Vagina (tissue), 2 donors: ENCODE measurements at regions of chr3 and their contacts with region 1.

Region 1: GRCh38 chr3:127970966-127971592 is 56.0 kb downstream of the KBTBD12 start:
- DNase-seq: no peak
- H3K4me3 ChIP-seq: no peak overlapping the region
- H3K27ac ChIP-seq: no peak overlapping the region
- H3K4me1 ChIP-seq: no peaks in the 10 kb centered on the region
- H3K27me3 ChIP-seq: no peaks in the 10 kb centered on the region
- CTCF ChIP-seq: peak in 2 of 3 experiments; percentile 46 to 63
- POLR2A ChIP-seq: no peak

Region 2: GRCh38 chr3:127652231-127652995 is 318.7 kb before region 1 on chr3:
- intact Hi-C with region 1: loop called (anchors 5 kb)
- DNase-seq: no peak
- H3K4me3 ChIP-seq: no peak overlapping the region
- H3K27ac ChIP-seq: no peak overlapping the region
- H3K4me1 ChIP-seq: no peaks in the 10 kb centered on the region
- H3K27me3 ChIP-seq: no peaks in the 10 kb centered on the region
- CTCF ChIP-seq: peak; percentile 65 to 82 (median 76)
- POLR2A ChIP-seq: no peak